Tibial artery (tissue), 4 donors: ENCODE measurements at regions of chr12 and their contacts with region 1.

Region 1: GRCh38 chr12:68866950-68867349 is 59.0 kb downstream of the MDM2 start:
- DNase-seq: no peak
- H3K4me3 ChIP-seq: no peak overlapping the region
- H3K27ac ChIP-seq: no peak overlapping the region
- H3K4me1 ChIP-seq: no peaks in the 10 kb centered on the region
- H3K27me3 ChIP-seq: no peaks in the 10 kb centered on the region
- CTCF ChIP-seq: no peak

Region 2: GRCh38 chr12:69068431-69068830 is 201.5 kb after region 1 on chr12:
- intact Hi-C with region 1: loop called (anchors 5 kb)
- DNase-seq: no peak
- H3K4me3 ChIP-seq: no peak overlapping the region
- H3K27ac ChIP-seq: no peak overlapping the region
- H3K4me1 ChIP-seq: no peaks in the 10 kb centered on the region
- H3K27me3 ChIP-seq: no peaks in the 10 kb centered on the region
- CTCF ChIP-seq: no peak